Left cardiac atrium (tissue), 4 donors: ENCODE measurements at regions of chr14 and their contacts with region 1.

Region 1: GRCh38 chr14:55579724-55580469 is at the start of gene KTN1:
- DNase-seq: peak; percentile 89
- ATAC-seq: peak; percentile 93 to 94
- total RNA-seq, gene KTN1: 173 to 176 TPM

Region 2: DNA sequence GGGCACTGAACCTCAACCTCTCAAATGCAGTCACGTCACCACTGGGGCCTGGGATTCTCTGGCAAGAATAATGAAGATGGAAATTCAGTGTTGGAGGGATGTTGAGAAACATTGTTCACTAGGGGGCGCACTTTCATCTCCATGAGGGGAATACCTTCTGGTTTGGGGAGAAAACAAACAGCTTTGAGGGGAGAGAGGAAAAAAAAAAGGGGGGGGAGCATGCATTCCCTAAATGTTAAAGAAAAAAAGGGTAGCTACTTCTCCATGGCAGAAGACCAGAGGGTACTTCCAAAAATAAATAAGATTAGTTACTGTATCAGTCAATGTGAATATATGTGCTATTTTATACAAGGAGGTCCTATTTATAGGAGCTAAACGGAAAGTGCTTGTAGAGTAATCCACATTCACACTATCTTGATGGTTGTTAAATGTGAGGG is 133.7 kb before region 1 on chr14:
- intact Hi-C with region 1: loop called in 1 of 2 experiments (anchors 10 kb)
- DNase-seq: peak; percentile 48
- ATAC-seq: peak; percentile 58 to 69